Activated CD4-positive, alpha-beta T cell treated with anti-CD3 and anti-CD28 coated beads, Interleukin-2, amount 10 ng/mL, durations not matched to agents 7 days and 5 days (primary cell): ENCODE measurements at regions of chr14 and their contacts with region 1.

Region 1: DNA sequence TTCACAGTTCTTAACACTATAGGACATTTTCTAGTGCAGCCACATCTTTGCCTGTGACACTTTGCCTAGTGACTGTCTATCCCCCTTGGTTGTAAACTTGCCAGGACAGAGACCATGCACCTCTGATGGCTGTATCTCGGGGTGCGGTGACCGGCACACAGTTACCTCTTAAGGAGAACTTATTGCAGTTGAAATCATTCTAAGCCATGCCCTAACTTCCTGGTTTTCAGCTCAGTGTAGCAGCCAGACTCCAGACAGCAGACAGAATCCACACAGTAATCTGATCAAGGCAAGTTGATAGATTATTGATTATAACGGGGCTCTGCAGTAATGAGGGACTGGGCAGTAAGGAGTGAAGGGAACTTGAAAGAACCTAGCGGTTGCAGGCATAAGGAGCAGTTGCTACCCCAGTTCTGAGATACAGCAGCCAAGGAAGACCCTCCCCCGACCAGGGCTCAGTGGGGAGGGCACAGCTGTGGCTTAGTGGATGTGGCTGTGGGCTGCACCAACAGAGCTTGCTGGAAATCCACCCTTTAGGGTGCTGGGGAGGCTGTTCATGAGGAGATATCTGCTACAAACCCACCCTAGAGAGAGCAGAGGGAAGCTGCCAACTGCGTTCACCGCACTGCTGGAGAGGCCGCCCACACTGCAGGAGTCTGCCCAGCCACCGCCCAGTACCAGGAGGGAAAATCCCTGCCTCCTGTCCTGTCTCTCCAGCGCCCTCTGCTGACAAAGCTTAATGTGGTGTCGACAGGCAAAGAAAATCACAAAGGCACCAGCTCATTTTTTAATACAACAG is 58.2 kb upstream of the BEGAIN start:
- DNase-seq: peak; percentile 92
- H3K4me3 Mint-ChIP-seq: peak overlapping the region; percentile 12
- H3K27ac Mint-ChIP-seq: peak overlapping the region; percentile 78
- H3K4me1 Mint-ChIP-seq: peaks cover 53% of the 10 kb centered on the region
- H3K27me3 Mint-ChIP-seq: peaks cover 13% of the 10 kb centered on the region

Region 2: GRCh38 chr14:100383727-100384158 is 261.6 kb before region 1 on chr14:
- CTCF ChIA-PET with region 1: interaction called, 27 read pairs
- POLR2A ChIA-PET with region 1: no interaction called
- DNase-seq: peak; percentile 73
- H3K4me3 Mint-ChIP-seq: no peak overlapping the region
- H3K27ac Mint-ChIP-seq: no peak overlapping the region
- H3K4me1 Mint-ChIP-seq: peaks cover 15% of the 10 kb centered on the region
- H3K27me3 Mint-ChIP-seq: no peaks in the 10 kb centered on the region

Region 3: DNA sequence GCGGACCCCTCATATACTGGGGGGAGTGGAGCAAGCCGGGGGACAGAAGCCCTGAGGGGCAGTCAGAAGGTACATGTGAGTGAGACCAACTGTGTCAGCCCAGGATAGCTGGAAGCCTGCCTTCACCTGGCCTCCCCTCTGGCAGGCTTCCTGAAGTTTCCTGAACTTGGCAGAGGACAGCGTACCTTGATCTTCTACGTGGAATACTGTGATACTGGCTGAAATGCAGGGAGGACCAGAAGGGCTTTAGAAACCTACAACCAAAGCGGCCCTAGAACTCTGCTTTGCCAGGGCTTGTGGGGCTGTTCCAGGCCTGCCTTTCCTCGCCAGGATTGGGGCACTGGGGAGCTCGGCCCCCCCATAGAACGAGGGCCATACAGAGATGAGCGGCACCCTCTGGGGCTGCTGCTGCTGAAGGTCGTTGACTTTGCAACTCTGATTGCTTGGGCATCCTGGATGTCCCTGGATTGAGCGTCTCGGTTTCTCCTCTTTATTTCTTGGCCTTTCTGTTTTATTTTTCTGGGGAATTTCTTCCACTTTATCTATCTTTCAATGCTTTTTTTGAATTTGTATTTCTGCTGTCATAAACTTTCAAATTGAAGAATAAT is 255.8 kb before region 1 on chr14:
- CTCF ChIA-PET with region 1: interaction called, 27 read pairs
- POLR2A ChIA-PET with region 1: no interaction called
- DNase-seq: no peak
- H3K4me3 Mint-ChIP-seq: no peak overlapping the region
- H3K27ac Mint-ChIP-seq: no peak overlapping the region
- H3K4me1 Mint-ChIP-seq: peaks cover 10% of the 10 kb centered on the region
- H3K27me3 Mint-ChIP-seq: no peaks in the 10 kb centered on the region

Region 4: GRCh38 chr14:100524933-100525243 is 120.5 kb before region 1 on chr14:
- CTCF ChIA-PET with region 1: interaction called, 17 read pairs
- POLR2A ChIA-PET with region 1: no interaction called
- DNase-seq: peak; percentile 57
- H3K4me3 Mint-ChIP-seq: no peak overlapping the region
- H3K27ac Mint-ChIP-seq: no peak overlapping the region
- H3K4me1 Mint-ChIP-seq: no peaks in the 10 kb centered on the region
- H3K27me3 Mint-ChIP-seq: no peaks in the 10 kb centered on the region

Region 5: DNA sequence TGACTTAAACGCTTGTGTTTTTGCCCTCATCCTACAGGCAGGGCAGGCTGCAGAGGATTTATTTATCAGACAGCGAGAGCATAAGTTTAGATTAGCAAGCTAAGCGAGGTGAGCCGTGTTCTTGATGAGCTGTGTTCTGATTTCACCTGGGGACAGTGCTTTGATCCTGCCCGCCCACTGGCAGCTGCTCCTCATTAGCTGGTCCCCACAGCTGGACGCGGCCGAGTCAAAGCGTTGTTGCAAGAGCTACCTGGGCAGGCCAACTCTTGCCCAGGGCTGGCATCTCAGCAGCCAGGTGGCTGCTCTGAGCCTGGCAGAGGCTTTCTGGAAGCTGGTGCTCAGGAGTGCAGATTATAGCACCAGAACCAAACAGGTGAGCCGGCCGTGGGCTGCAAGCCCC is 11.4 kb before region 1 on chr14:
- CTCF ChIA-PET with region 1: interaction called, 37 read pairs
- POLR2A ChIA-PET with region 1: no interaction called
- DNase-seq: no peak
- H3K4me3 Mint-ChIP-seq: no peak overlapping the region
- H3K27ac Mint-ChIP-seq: no peak overlapping the region
- H3K4me1 Mint-ChIP-seq: peaks cover 5% of the 10 kb centered on the region
- H3K27me3 Mint-ChIP-seq: peaks cover 29% of the 10 kb centered on the region